Common myeloid progenitor, CD34-positive (primary cell): ENCODE measurements at regions of chr16 and their contacts with region 1.

Region 1: DNA sequence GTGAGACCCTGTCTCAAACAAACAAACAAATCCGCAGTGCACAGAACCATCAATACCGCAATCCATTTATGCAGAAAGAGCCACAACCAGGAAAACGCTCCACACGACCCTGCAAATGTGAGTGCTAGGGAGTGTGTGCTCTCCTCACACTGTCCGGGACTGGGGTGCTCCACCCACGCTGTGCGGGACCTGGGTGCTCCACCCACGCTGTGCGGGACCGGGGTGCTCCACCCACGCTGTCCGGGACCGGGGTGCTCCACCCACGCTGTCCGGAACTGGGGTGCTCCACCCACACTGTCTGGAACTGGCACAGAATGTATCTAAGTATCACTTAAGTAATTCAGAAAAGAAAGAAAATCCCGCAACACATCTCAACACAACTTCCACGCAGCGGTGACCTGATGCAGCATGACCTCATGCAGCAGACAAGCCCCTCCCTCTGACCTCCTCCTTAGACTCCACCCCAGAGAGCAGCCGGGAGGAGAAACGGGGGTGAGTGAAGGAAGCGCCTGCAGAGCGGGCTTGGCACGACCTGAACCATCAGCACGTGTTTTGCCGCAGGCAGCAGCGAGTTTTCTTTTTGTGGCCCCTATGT is 38.5 kb downstream of the ZNF276 start:
- DNase-seq: no peak
- H3K4me3 ChIP-seq: no peak overlapping the region
- H3K27ac ChIP-seq: no peak overlapping the region
- H3K4me1 ChIP-seq: peaks cover 5 to 35% (median 20%) of the 10 kb centered on the region in 4 experiments
- H3K27me3 ChIP-seq: no peaks in the 10 kb centered on the region

Region 2: GRCh38 chr16:89706507-89707263 is 53.2 kb before region 1 on chr16:
- CTCF ChIA-PET with region 1: interaction called, 15 read pairs
- POLR2A ChIA-PET with region 1: no interaction called
- DNase-seq: no peak
- H3K4me3 ChIP-seq: peak overlapping the region in 1 of 7 experiments; percentile 40
- H3K27ac ChIP-seq: no peak overlapping the region
- H3K4me1 ChIP-seq: peaks cover 0 to 9% (median 6%) of the 10 kb centered on the region in 4 experiments
- H3K27me3 ChIP-seq: no peaks in the 10 kb centered on the region

Region 3: DNA sequence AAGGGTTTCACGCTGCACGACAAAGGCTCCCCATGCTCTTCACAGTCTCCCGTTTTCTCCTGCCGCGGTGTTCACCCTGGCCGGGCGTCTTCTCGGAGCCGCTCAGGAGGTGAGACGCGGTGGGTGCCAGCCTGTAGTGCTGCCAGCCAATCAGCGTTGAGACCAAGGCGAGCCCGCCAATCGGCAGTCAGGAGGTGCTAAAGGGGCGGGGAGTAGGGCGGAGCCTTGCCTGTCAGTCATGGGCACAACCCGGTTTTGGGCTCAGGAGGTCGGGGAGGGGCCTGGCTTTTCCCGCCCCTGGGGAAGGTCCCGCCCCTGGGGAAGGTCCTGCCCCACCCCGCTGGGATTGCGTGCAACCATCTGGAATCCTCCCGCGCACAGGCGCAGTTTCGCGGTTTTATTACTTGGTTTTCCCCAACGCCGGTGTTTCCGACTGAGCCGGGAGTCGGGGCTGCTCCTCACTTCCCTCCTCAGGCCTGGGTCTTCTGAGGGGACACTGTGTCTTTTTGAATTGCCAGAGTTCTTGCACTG is 317.4 kb after region 1 on chr16 and contains the start of gene PRDM7:
- CTCF ChIA-PET with region 1: no interaction called
- POLR2A ChIA-PET with region 1: no interaction called
- DNase-seq: peak; percentile 92 to 94 (median 93)
- H3K4me3 ChIP-seq: peak within 1 kb of the TSS; percentile 31 to 72 (median 53)
- H3K27ac ChIP-seq: peak within 1 kb of the TSS in 1 of 2 experiments; percentile 74
- H3K4me1 ChIP-seq: peaks cover 2 to 24% (median 19%) of the 10 kb centered on the region in 4 experiments
- H3K27me3 ChIP-seq: no peaks in the 10 kb centered on the region